Heart right ventricle (tissue), 16 donors: ENCODE measurements at regions of chr3 and their contacts with region 1.

Region 1: DNA sequence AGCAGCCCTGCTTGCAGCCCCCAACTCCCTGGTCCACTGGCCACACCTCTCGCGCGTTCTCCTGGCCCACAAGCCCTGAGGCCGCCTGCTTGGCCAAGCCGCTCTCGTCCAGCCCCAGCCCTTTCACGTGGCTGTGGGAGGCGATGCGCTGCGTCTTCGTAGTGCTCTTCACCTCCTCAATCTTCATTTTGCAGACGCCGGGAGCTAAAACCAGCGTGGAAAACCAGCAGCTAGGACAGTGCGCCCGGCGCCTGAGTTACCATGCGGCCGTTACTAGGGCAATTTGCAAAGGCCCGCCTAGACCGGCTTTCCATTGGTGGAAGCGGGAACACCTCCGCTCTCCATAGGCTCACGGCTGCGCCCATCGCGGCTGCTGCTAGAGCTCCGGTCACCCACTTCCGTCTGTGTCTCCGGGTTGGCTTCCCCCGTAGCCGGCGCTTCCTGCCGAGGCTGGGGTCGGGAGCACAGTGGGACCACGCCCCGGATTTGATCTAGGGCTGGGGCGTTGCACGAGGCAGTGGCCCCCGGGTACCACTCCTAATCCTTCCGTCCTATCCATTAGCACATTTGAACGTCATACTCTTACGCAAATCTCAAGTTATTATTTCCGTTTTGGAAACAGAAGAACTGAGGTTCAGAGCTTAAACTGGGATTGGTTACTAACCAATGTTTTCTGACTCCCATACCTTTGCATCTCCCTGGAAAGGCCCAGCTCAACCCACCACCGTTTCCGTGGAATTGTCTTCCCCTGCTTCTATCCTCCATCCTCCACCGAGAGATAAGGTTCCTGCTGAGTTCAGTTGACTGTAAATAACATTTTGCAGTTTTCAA is at the start of gene RUVBL1:
- DNase-seq: peak; percentile 97 to 98
- ATAC-seq: peak; percentile 100
- H3K4me3 ChIP-seq: peak within 1 kb of the TSS; percentile 64 to 96 (median 82)
- H3K27ac ChIP-seq: peak within 1 kb of the TSS; percentile 9 to 88 (median 82)
- H3K4me1 ChIP-seq: peaks cover 0 to 19% (median 12%) of the 10 kb centered on the region in 9 donors
- H3K27me3 ChIP-seq: no peaks in the 10 kb centered on the region
- CTCF ChIP-seq: no peak
- total RNA-seq, gene RUVBL1: 23.5 to 34.4 (median 25.6) TPM

Region 2: GRCh38 chr3:128153156-128154041 is 29.6 kb after region 1 on chr3 and contains the start of gene EEFSEC:
- intact Hi-C with region 1: loop called in 2 of 10 experiments (anchors 1 to 2 kb)
- DNase-seq: peak; percentile 83 to 86
- ATAC-seq: peak; percentile 90 to 94 (median 93)
- H3K4me3 ChIP-seq: peak within 1 kb of the TSS; percentile 69 to 99 (median 95)
- H3K27ac ChIP-seq: peak within 1 kb of the TSS; percentile 89 to 98 (median 94)
- H3K4me1 ChIP-seq: peaks cover 6 to 31% (median 24%) of the 10 kb centered on the region in 9 donors
- H3K27me3 ChIP-seq: no peaks in the 10 kb centered on the region
- CTCF ChIP-seq: no peak
- total RNA-seq, gene EEFSEC: 16.5 to 29.5 (median 25.4) TPM

Region 3: GRCh38 chr3:128266453-128266852 is 142.7 kb after region 1 on chr3:
- intact Hi-C with region 1: no loop called
- DNase-seq: no peak
- ATAC-seq: peak in 4 of 8 donors; percentile 34 to 57 (median 46)
- H3K4me3 ChIP-seq: no peak overlapping the region
- H3K27ac ChIP-seq: no peak overlapping the region
- H3K4me1 ChIP-seq: peaks cover 0 to 9% (median 3%) of the 10 kb centered on the region in 9 donors
- H3K27me3 ChIP-seq: no peaks in the 10 kb centered on the region
- CTCF ChIP-seq: no peak